Ascending aorta (tissue), 2 donors: ENCODE measurements at regions of chr14 and their contacts with region 1.

Region 1: GRCh38 chr14:20682435-20683124 is 1.8 kb upstream of the RNASE4 start:
- DNase-seq: peak; percentile 80 to 95
- H3K4me3 ChIP-seq: peak overlapping the region; percentile 89 to 94
- H3K27ac ChIP-seq: peak overlapping the region; percentile 100
- H3K4me1 ChIP-seq: peaks cover 13 to 35% of the 10 kb centered on the region in 2 donors
- H3K27me3 ChIP-seq: no peaks in the 10 kb centered on the region
- CTCF ChIP-seq: peak in 2 of 3 experiments; percentile 9 to 37

Region 2: GRCh38 chr14:20413045-20413799 is 269.4 kb before region 1 on chr14 and contains the start of gene TEP1:
- intact Hi-C with region 1: loop called (anchors 2 kb)
- DNase-seq: peak; percentile 45 to 95
- H3K4me3 ChIP-seq: peak within 1 kb of the TSS; percentile 85 to 88
- H3K27ac ChIP-seq: peak within 1 kb of the TSS; percentile 97 to 98
- H3K4me1 ChIP-seq: peaks cover 0 to 5% of the 10 kb centered on the region in 2 donors
- H3K27me3 ChIP-seq: no peaks in the 10 kb centered on the region
- CTCF ChIP-seq: no peak
- total RNA-seq, gene TEP1: 43.7 TPM

Region 3: DNA sequence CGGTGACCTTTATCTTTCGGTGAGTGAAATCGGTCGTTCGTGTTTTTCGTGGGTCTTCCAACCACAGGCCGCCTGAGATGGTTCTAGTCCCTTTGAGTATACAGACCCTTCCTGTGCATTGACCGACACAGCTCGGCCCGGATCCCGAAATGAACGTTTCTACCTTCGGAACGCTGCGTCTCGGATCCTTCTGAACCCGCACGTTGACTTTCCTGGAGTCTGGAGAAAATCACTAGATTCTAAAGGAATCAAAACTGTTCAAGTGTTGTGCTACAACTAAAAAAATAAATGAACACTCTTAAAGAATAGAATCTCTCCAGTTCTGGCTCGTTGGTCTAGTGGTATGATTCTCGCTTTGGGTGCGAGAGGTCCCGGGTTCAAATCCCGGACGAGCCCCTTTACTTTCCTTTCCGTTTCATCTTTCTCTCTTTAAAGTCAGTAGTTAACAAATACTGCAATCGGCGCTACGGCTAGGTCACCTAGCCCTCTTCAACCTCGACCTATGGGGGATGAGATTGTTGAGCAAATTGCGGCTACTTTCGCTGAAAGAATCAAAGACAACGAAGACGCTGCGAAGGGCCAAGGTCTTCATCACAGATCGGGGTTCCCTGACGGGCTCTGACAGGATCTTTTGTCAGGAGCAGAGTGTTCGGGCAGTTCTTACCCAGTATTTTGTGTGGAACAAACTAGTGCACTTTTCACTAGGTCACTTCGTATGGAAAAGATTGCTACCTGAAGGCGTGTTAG is 49.7 kb before region 1 on chr14:
- intact Hi-C with region 1: loop called (anchors 2 kb)
- DNase-seq: no peak
- H3K4me3 ChIP-seq: peak overlapping the region; percentile 36 to 58
- H3K27ac ChIP-seq: peak overlapping the region in 1 of 2 donors; percentile 44
- H3K4me1 ChIP-seq: peaks cover 4 to 12% of the 10 kb centered on the region in 2 donors
- H3K27me3 ChIP-seq: no peaks in the 10 kb centered on the region
- CTCF ChIP-seq: no peak

Region 4: DNA sequence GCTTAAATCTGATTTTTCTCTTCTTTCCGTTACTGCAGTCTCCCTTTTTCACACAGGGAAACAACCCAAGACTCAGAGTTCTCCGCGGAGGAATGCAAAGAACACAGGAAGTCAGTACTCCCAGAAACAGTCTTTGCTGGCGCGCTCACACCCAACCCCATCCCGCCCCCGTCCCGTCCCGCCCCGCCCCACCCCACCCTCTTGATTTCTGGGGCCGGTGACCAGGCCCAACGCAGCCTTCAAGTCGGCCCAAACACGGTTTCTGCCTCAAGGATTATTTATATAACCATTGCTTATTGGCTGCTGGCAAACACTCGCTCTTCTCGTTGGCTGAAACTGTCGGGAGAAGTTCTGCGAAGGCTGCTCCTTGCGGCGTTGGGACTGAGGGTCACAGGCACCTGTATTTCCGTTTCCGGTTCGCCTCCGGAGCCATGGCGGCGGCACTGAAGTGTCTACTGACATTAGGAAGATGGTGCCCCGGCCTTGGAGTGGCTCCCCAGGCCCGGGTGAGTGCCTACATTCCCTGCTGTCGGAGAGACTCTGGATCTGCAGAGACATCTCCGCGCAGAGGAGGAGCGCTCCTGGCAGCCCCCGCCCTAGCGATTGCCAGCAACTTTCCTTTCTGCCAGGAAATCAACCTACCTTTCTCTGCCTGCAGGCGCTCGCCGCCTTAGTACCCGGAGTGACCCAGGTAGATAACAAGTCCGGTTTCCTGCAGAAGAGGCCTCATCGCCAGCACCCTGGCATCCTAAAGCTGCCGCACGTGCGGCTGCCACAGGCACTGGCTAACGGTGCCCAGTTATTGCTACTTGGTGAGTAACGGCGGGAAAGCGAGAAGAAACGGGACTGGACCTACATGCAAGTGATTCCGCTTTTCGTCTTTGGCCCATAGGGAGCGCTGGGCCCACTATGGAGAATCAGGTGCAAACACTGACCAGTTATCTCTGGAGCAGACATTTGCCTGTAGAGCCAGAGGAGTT is 307.3 kb after region 1 on chr14 and contains the start of gene METTL17:
- intact Hi-C with region 1: loop called (anchors 1 kb)
- DNase-seq: peak; percentile 65 to 97
- H3K4me3 ChIP-seq: peak within 1 kb of the TSS; percentile 88 to 97
- H3K27ac ChIP-seq: peak within 1 kb of the TSS; percentile 88 to 94
- H3K4me1 ChIP-seq: peaks cover 27 to 38% of the 10 kb centered on the region in 2 donors
- H3K27me3 ChIP-seq: no peaks in the 10 kb centered on the region
- CTCF ChIP-seq: no peak
- total RNA-seq, gene METTL17: 38.8 TPM

Region 5: DNA sequence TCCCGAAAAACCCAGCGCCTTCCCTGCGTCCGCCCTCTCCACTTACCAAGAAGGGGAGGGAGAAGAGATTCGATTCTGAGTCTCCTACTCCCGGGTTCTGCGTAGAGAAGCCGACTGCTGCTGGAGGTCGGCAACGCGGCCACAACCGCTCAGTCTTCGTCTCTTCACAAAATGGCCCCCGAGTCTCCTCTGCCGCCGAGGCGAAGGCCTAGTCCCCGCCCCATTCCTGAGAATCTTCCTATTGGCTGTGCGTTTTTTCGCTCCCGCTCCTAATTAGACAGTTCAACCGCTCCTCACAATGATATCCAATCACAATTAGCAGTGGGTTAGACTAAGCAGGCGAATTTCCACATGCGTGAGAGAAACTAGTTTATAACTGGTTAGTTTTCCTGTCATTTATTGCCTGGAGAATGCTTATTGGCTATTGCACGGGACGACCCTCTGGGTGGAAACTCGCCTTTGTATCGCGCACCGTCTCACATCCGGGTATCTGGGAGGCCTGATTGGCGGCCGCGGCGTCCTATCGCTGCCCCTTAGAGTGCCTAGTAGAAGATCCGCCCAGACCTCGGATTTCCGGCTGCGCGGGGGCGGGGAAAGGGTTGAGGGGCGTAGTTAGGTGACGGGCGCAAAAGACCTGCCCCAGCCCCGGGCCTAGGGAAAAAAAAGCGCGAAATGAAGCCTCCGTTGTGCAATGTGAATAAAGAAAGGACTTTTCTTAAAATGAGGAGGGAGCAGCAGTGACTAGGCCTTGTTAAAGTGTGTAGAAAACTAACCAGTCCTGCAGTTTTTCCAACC is 586.9 kb after region 1 on chr14 and contains the start of gene HNRNPC:
- intact Hi-C with region 1: loop called (anchors 2 kb)
- DNase-seq: peak; percentile 100
- H3K4me3 ChIP-seq: peak within 1 kb of the TSS; percentile 67 to 95
- H3K27ac ChIP-seq: peak within 1 kb of the TSS; percentile 96 to 98
- H3K4me1 ChIP-seq: peaks cover 13% of the 10 kb centered on the region in 2 donors
- H3K27me3 ChIP-seq: no peaks in the 10 kb centered on the region
- CTCF ChIP-seq: no peak
- total RNA-seq, gene HNRNPC: 303 TPM